ENCODE measurements at regions of chr12 and their contacts with region 1.

Region 1: DNA sequence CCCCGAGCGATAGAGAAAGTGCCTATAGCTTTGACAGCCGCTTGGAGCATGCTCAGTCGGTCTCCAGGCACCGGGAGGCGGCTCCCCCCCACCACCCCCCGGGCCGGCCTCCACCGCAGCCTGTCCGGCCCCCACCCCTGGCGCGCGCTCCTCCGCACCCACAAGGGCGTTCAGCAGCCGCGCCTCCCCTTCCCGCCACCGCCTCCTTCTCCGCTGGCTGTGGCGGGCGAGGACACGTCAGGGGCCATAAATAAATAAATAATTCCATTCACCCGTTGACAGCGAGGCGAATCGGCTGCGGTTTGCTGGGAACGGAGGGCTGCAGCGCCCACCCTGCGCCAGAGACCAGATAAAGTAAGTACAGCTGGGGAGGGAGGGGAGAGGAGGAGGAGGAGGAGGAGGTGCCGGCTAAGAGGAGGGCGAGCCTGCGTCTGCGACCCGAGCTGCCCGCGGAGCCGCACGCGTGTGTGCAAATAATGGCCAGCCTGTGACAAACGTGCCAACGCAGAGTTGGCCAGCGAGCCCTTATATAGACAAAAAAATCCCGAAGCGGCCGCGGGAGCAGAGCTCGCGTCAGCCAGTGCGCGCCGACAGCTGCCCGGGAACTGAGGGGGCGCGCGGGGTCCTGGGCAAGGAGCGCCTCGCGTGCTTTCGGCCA is at the start of gene SLC16A7:
- DNase-seq: peak; percentile 95
- ATAC-seq: peak; percentile 88
- total RNA-seq, gene SLC16A7: 129 TPM

Region 2: GRCh38 chr12:59776482-59776881 is 180.5 kb after region 1 on chr12:
- intact Hi-C with region 1: loop called (anchors 10 kb)
- DNase-seq: no peak
- ATAC-seq: no peak

Region 3: GRCh38 chr12:59895166-59895775 is 299.3 kb after region 1 on chr12:
- intact Hi-C with region 1: no loop called
- DNase-seq: no peak
- ATAC-seq: no peak

Measured in left ventricle myocardium superior (tissue), 1 donor.